ENCODE measurements at regions of chr11 and their contacts with region 1.

Region 1: DNA sequence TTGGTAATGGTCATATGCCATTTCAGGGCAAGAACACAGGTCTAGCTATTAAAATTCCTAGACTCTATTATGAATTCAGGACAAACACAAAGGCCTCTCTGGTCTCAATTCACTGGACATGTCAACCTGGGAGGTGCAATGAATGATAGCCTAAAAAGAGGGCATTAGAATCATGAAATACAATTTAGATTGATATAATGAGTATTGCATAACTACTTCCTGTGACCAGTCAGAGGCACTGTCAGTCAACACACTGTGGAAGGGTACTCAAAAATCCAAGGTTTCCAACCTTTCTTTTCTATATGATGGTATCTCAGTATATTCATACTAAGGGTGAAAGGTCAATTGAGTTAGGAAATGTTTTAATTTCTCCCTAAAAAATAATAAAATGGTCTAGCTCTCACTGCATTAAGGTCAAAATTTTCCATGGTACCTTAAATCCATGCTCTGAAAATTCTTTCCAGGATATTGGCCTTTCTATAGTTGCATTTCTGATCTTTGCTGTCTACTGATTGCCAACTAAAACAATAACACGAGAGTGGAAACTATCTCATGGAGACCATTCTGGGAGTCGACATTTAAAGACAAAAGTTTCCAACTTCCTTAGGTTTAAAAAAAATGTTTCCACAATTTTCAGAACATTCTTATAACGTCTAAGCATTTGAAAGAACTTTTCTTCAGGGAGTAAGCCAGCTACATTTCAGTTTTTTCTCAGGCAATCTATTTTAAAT is 81.7 kb upstream of the APOA1 start:
- DNase-seq: no peak
- H3K4me3 ChIP-seq: no peak overlapping the region
- H3K27ac ChIP-seq: no peak overlapping the region
- H3K4me1 ChIP-seq: no peaks in the 10 kb centered on the region
- H3K27me3 ChIP-seq: no peaks in the 10 kb centered on the region
- CTCF ChIP-seq: no peak
- EP300 ChIP-seq: no peak
- POLR2A ChIP-seq: no peak
- RAD21 ChIP-seq: no peak

Region 2: GRCh38 chr11:116736763-116737162 is 182.3 kb before region 1 on chr11:
- CTCF ChIA-PET with region 1: no interaction called
- POLR2A ChIA-PET with region 1: no interaction called
- DNase-seq: peak in 1 of 2 experiments; percentile 45
- H3K4me3 ChIP-seq: no peak overlapping the region
- H3K27ac ChIP-seq: no peak overlapping the region
- H3K4me1 ChIP-seq: peaks cover 0 to 10% (median 6%) of the 10 kb centered on the region in 4 experiments; a peak in 6 of 7 replicates
- H3K27me3 ChIP-seq: no peaks in the 10 kb centered on the region
- CTCF ChIP-seq: peak; percentile 49 to 94 (median 71)
- EP300 ChIP-seq: no peak
- POLR2A ChIP-seq: no peak
- RAD21 ChIP-seq: peak; percentile 13 to 44; a peak in 3 of 4 replicates

Region 3: DNA sequence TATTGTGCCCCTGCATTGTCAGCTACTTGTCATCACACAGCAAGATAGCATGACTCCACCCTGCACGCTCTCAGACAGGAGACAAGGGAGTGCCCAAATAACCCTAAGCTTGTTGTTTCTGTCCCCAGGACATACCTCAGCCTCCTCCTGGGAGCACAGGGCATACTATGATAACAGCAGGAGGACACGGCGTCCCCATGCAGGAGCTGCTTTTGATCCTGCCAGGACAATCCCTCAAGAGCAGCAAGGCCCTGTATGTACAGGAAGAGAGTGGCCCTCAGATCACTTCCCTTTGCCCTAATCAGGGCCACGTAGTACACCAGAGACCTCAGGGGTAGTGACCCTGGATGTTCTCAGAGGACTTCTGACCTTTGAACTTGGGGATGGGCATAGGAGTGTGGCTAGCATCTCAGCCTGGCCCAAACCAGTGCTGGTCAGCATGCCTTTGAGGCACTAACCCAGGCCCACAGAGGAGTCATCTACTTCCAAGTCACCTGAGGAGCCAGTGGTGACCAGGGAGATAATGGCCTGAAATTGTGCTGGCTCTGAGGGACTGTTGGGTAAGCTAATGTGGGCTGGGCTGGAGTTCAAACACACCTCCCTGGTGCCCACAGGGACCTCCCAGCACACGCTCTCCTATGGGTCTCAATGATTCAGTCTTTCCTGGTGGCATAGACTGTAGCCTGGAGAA is 105.2 kb before region 1 on chr11:
- CTCF ChIA-PET with region 1: no interaction called
- POLR2A ChIA-PET with region 1: no interaction called
- DNase-seq: no peak
- H3K4me3 ChIP-seq: no peak overlapping the region
- H3K27ac ChIP-seq: no peak overlapping the region
- H3K4me1 ChIP-seq: no peaks in the 10 kb centered on the region
- H3K27me3 ChIP-seq: no peaks in the 10 kb centered on the region
- CTCF ChIP-seq: no peak
- EP300 ChIP-seq: no peak
- POLR2A ChIP-seq: no peak
- RAD21 ChIP-seq: no peak

Region 4: DNA sequence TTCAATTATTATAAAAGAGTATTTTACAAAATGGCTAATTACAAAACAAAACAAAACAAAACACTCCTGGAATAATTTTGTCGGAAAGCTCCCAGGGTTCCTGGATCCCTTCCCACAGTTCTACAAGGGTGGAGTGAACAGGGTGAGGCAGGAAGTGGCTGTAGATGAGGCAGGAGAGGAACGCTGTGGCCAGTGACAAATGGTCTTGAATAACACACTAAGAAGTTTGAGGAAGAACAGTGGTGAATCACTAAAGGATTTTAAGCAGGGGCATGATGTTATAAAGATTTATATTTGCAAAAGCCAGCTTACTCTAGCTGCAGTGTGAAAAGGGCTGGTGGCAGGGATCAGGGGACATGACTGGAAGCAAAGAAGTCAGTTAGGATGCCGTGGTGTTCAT is 47.8 kb before region 1 on chr11:
- CTCF ChIA-PET with region 1: no interaction called
- POLR2A ChIA-PET with region 1: no interaction called
- DNase-seq: no peak
- H3K4me3 ChIP-seq: no peak overlapping the region
- H3K27ac ChIP-seq: no peak overlapping the region
- H3K4me1 ChIP-seq: no peaks in the 10 kb centered on the region
- H3K27me3 ChIP-seq: no peaks in the 10 kb centered on the region
- CTCF ChIP-seq: no peak
- EP300 ChIP-seq: no peak
- POLR2A ChIP-seq: no peak
- RAD21 ChIP-seq: no peak

Region 5: GRCh38 chr11:116930177-116930576 is 11.1 kb after region 1 on chr11:
- CTCF ChIA-PET with region 1: interaction called, 19 read pairs
- POLR2A ChIA-PET with region 1: interaction called, 6 read pairs
- DNase-seq: no peak
- H3K4me3 ChIP-seq: no peak overlapping the region
- H3K27ac ChIP-seq: no peak overlapping the region
- H3K4me1 ChIP-seq: peaks cover 1 to 7% (median 5%) of the 10 kb centered on the region in 4 experiments; a peak in 4 of 7 replicates
- H3K27me3 ChIP-seq: no peaks in the 10 kb centered on the region
- CTCF ChIP-seq: no peak
- EP300 ChIP-seq: no peak
- POLR2A ChIP-seq: no peak
- RAD21 ChIP-seq: no peak

Region 6: DNA sequence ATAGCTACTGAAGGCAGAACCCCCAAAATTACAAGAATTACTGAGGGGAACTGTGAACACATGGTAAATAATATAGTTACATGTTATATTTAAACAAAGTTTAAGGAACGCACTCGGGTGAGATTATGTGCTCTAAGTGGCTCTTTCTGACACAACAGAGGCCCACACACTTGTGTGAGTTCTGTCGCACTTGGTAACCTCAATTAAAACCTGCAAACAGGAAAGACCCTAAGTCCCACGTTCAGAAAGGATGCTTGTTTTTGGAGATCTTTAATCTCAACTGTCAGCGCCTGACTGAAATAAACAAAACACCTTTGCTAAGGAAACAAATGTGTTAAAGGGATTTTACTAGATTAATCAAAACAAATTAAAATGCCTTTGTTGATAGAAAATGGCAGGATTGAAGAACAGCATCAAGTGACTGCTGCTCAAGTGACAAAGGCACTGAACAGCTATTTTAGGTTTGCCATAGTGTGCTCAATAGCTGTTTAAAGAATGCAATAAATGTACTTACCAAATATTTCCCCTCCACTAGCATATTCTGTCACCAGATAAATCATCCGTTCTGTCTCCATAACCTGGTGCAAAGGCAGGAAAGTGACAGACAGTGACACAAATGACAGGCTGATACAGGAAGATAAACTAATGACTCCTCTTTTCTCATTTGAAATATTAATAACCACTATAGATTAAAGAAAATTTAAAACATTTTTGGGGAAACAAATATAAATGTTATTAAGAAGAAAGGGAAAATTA is 34.6 kb after region 1 on chr11:
- CTCF ChIA-PET with region 1: no interaction called
- POLR2A ChIA-PET with region 1: no interaction called
- DNase-seq: no peak
- H3K4me3 ChIP-seq: no peak overlapping the region
- H3K27ac ChIP-seq: no peak overlapping the region
- H3K4me1 ChIP-seq: peaks cover 0 to 4% (median 3%) of the 10 kb centered on the region in 4 experiments; a peak in 6 of 7 replicates
- H3K27me3 ChIP-seq: no peaks in the 10 kb centered on the region
- CTCF ChIP-seq: no peak
- EP300 ChIP-seq: no peak
- POLR2A ChIP-seq: no peak
- RAD21 ChIP-seq: no peak

Measured in H1 (cell line).